ENCODE measurements at regions of chr5 and their contacts with region 1.

Region 1: GRCh38 chr5:154196955-154197652 is 6.6 kb downstream of the GALNT10 start:
- DNase-seq: peak; percentile 51
- H3K4me3 ChIP-seq: no peak overlapping the region
- H3K27ac ChIP-seq: peak overlapping the region; percentile 21
- H3K27me3 ChIP-seq: no peaks in the 10 kb centered on the region
- CTCF ChIP-seq: peak; percentile 61

Region 2: GRCh38 chr5:153613144-153613543 is 584.0 kb before region 1 on chr5:
- CTCF ChIA-PET with region 1: no interaction called
- POLR2A ChIA-PET with region 1: no interaction called
- DNase-seq: no peak
- H3K4me3 ChIP-seq: no peak overlapping the region
- H3K27ac ChIP-seq: no peak overlapping the region
- H3K27me3 ChIP-seq: no peaks in the 10 kb centered on the region
- CTCF ChIP-seq: no peak

Region 3: GRCh38 chr5:154179846-154180710 is 17.0 kb before region 1 on chr5:
- CTCF ChIA-PET with region 1: interaction called, 10 read pairs
- POLR2A ChIA-PET with region 1: no interaction called
- DNase-seq: peak; percentile 33
- H3K4me3 ChIP-seq: no peak overlapping the region
- H3K27ac ChIP-seq: no peak overlapping the region
- H3K27me3 ChIP-seq: peaks cover 9% of the 10 kb centered on the region
- CTCF ChIP-seq: peak; percentile 93

Region 4: GRCh38 chr5:154221371-154221896 is 24.3 kb after region 1 on chr5:
- CTCF ChIA-PET with region 1: interaction called, 17 read pairs
- POLR2A ChIA-PET with region 1: interaction called, 5 read pairs
- DNase-seq: peak; percentile 51
- H3K4me3 ChIP-seq: no peak overlapping the region
- H3K27ac ChIP-seq: peak overlapping the region; percentile 92
- H3K27me3 ChIP-seq: no peaks in the 10 kb centered on the region
- CTCF ChIP-seq: no peak

Region 5: DNA sequence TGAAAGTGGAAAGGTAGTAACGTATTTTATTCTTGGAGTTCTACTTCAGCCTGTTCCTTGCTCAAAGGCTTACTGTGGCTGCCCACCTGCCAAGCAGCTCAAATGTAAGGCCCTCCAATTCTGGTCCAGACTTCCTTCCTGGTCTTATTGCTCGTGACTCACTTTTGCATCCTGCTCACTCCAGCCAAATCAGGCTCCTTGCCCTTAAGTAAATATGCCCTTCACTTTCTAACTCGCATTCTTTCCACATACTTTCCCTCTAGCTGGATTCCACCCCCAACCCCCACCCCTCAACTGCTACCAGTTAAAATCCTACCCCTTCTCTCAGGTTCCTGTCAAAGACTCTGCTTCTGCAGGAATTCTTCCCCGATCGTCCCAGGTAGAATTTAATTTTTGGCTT is 90.0 kb after region 1 on chr5:
- CTCF ChIA-PET with region 1: interaction called, 15 read pairs
- POLR2A ChIA-PET with region 1: no interaction called
- DNase-seq: peak; percentile 49
- H3K4me3 ChIP-seq: no peak overlapping the region
- H3K27ac ChIP-seq: no peak overlapping the region
- H3K27me3 ChIP-seq: no peaks in the 10 kb centered on the region
- CTCF ChIP-seq: no peak

Region 6: GRCh38 chr5:154405078-154405792 is 208.1 kb after region 1 on chr5:
- CTCF ChIA-PET with region 1: interaction called, 98 read pairs
- POLR2A ChIA-PET with region 1: interaction called, 3 read pairs
- DNase-seq: peak; percentile 43
- H3K4me3 ChIP-seq: peak overlapping the region; percentile 45
- H3K27ac ChIP-seq: no peak overlapping the region
- H3K27me3 ChIP-seq: no peaks in the 10 kb centered on the region
- CTCF ChIP-seq: peak; percentile 88